ENCODE measurements at regions of chr7 and their contacts with region 1.

Region 1: DNA sequence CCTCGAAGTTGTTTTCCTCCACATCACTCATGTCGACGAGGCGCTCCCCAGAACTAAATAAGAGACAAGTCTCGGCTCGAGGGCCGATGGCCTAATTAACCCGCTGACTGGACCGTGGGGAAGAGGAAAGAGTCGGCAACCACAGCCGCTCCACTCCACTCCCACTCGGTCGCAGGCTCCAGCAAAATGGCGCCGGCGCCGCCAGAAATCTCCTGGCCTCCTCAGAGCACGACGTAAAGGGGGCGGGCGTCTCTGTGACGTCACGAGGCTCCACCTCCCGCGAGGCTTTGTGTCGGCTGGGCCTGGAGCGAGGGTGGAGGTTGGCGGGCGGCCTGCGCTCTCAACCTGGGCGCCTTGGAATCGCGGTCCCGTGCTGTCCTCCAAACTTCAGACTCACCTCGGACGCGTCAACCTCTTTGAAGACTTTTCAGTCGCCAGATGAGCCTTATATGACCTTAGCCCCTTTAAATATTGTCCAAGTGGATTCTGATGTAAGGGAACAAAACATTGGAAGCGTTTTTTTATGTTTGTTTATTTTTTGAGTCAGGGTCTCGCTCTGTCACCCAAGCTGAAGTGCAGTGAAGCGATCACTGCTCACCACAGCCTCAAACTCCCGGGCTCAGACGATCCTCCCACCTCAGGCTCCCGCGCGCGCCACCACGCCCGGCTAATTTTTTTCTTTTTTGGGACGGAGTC is at the start of gene TRA2A:
- DNase-seq: peak; percentile 97
- ATAC-seq: peak; percentile 90
- H3K4me3 ChIP-seq: peak within 1 kb of the TSS; percentile 80 to 100 (median 100)
- H3K4me3 Mint-ChIP-seq: peak within 1 kb of the TSS; percentile 99
- H3K27ac ChIP-seq: peak within 1 kb of the TSS; percentile 97 to 99
- H3K27ac Mint-ChIP-seq: peak within 1 kb of the TSS; percentile 99
- H3K4me1 ChIP-seq: peaks cover 29 to 30% of the 10 kb centered on the region in 2 donors
- H3K4me1 Mint-ChIP-seq: peaks cover 44% of the 10 kb centered on the region
- H3K27me3 ChIP-seq: no peaks in the 10 kb centered on the region
- H3K27me3 Mint-ChIP-seq: no peaks in the 10 kb centered on the region
- CTCF ChIP-seq: no peak
- total RNA-seq, gene TRA2A: 173 and 184 TPM in 2 replicates

Region 2: DNA sequence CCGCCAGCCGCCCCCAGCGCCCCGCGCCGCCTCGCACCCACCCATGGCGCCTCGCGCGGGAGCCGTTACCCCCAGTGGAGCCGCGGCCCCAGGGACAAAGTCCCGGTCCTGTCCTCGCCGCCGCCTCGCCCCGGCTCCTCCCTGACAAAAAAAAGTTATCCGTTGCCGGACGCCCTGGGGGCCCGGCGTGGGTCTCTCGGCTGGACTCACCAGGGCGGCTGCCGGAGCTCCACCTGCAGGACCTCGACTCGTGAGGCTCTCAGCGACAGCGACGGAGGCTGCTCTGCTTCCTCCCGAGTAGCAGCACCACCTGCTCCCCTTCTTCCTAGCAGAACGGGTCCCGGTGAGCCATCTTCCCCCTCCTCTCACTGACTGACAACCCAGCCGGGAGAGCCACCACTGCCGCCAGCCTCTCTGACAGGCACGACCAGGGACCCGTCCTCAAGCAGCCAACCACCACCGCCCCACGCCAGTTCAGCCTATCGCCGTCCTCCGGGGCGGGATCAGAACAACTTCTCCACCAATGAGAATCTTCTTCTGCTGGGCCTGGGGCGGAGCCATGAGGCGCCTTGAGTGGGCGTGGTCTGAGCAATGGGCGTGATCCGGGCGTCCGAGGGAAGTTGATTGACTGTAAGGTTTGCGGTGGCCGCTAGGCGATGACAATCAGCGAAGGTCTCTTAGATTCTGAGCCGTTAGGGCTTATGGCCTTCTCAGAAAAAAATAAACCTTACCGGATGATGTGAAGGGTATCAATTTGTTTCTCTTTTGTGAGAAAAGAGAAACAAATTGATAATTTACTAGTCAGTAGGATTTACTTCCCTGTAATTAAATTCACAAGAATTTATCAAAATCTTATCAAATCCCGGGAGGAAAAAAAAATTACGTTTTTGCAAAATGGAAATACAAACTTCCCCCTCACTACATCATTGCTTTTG is 518.0 kb before region 1 on chr7 and contains the start of gene HYCC1:
- CTCF ChIA-PET with region 1: no interaction called
- POLR2A ChIA-PET with region 1: no interaction called
- intact Hi-C with region 1: loop called (anchors 10 kb)
- DNase-seq: peak; percentile 99
- ATAC-seq: peak; percentile 96
- H3K4me3 ChIP-seq: peak within 1 kb of the TSS; percentile 68 to 85 (median 80)
- H3K4me3 Mint-ChIP-seq: peak within 1 kb of the TSS; percentile 99
- H3K27ac ChIP-seq: peak within 1 kb of the TSS; percentile 63 to 70
- H3K27ac Mint-ChIP-seq: peak within 1 kb of the TSS; percentile 98
- H3K4me1 ChIP-seq: peaks cover 73 to 74% of the 10 kb centered on the region in 2 donors
- H3K4me1 Mint-ChIP-seq: peaks cover 42% of the 10 kb centered on the region
- H3K27me3 ChIP-seq: no peaks in the 10 kb centered on the region
- H3K27me3 Mint-ChIP-seq: no peaks in the 10 kb centered on the region
- CTCF ChIP-seq: peak; percentile 72
- total RNA-seq, gene HYCC1: 39.6 and 40.8 TPM in 2 replicates

Region 3: DNA sequence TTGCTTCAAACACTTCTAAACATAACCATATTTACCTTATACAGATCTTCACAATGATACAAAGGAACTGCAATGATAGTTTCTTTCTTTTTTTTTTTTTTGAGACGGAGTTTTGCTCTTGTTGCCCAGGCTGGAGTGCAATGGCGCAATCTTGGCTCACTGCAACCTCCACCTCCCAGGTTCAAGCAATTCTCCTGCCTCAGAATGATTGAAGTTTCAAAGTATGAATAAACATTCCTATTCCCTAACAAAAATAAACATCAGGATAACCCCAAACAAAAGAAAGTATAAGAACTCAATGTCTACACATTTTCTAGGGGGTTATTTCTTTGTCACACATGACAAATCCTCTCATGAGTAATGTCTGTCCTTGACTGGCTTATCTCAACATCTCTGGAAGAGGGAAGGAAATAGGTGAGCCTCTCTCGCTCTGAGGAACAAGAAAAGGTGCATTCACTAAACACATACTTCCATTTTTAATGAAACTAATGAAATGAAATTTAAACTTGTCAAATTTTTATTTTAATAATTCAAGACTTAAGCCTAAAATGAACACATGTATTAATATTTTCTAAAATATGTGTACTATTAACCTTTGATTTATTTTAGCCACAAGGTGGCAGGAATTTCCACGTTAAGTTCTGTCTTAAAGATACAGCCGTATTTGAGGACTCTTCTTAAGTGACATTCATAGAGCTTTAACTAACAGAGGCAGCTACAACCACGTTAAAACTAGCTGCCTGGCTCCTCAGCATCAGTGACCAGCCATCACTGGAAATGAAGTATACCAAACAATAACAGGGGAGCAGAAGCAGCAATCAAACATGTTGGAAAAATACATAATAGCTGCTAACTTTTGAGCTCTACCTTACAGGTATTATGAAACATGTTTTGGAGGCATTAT is 174.5 kb before region 1 on chr7:
- CTCF ChIA-PET with region 1: interaction called, 5 read pairs
- POLR2A ChIA-PET with region 1: interaction called, 5 read pairs
- intact Hi-C with region 1: loop called (anchors 5 kb)
- DNase-seq: peak; percentile 70
- ATAC-seq: peak; percentile 79
- H3K4me3 ChIP-seq: no peak overlapping the region
- H3K4me3 Mint-ChIP-seq: no peak overlapping the region
- H3K27ac ChIP-seq: no peak overlapping the region
- H3K27ac Mint-ChIP-seq: no peak overlapping the region
- H3K4me1 ChIP-seq: peaks cover 2 to 9% of the 10 kb centered on the region in 2 donors
- H3K4me1 Mint-ChIP-seq: peaks cover 15% of the 10 kb centered on the region
- H3K27me3 ChIP-seq: peaks cover 0 to 3% (median 0%) of the 10 kb centered on the region in 4 experiments
- H3K27me3 Mint-ChIP-seq: no peaks in the 10 kb centered on the region
- CTCF ChIP-seq: peak; percentile 78

Region 4: DNA sequence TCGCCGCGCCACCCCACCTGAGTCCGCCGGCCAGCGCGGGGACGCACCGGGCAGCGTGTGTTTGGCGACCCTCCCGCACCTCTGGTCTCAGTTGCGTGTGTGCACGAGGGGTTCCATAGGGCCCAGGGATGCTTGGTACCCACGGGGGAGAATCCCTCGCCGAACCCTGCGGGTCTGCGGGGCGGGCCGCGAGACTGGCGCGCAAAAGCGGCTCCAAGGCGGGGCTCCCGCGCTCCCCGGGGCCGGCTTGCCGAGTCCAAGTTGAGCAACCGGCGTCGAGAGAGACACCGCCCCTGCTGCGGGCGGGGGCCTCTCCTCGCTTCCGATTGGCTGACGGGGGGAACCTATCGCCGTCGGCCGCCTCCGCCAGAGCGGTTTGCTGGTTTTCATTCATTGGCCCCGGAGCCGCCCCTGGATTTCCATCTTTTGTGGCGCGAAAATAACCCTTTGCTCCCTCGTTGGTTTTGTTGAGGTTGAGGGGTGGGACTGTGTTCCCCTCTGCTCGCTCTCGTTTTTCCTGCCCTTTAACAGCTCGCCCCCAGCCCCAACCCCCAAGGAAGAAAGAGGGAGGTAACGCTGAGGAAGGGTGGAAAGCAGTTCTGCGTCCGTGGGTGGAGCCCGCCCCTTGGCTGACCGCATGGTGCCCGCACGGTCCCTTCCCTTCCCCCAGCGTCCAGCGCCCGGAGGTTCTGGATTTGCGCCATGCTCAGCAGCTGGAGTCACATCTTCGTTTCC is 57.7 kb before region 1 on chr7:
- CTCF ChIA-PET with region 1: no interaction called
- POLR2A ChIA-PET with region 1: interaction called, 3 read pairs
- intact Hi-C with region 1: loop called (anchors 2 kb)
- DNase-seq: peak; percentile 80
- ATAC-seq: peak; percentile 60
- H3K4me3 ChIP-seq: peak overlapping the region; percentile 1 to 81 (median 36)
- H3K4me3 Mint-ChIP-seq: peak overlapping the region; percentile 81
- H3K27ac ChIP-seq: no peak overlapping the region
- H3K27ac Mint-ChIP-seq: peak overlapping the region; percentile 71
- H3K4me1 ChIP-seq: peaks cover 41 to 51% of the 10 kb centered on the region in 2 donors
- H3K4me1 Mint-ChIP-seq: peaks cover 30% of the 10 kb centered on the region
- H3K27me3 ChIP-seq: peaks cover 0 to 83% (median 71%) of the 10 kb centered on the region in 4 experiments
- H3K27me3 Mint-ChIP-seq: peaks cover 61% of the 10 kb centered on the region
- CTCF ChIP-seq: no peak

Region 5: GRCh38 chr7:23597094-23598091 is 65.5 kb after region 1 on chr7 and contains the start of gene CCDC126:
- CTCF ChIA-PET with region 1: interaction called, 3 read pairs
- POLR2A ChIA-PET with region 1: no interaction called
- intact Hi-C with region 1: loop called (anchors 1 kb)
- DNase-seq: peak; percentile 89
- ATAC-seq: peak; percentile 92
- H3K4me3 ChIP-seq: peak within 1 kb of the TSS; percentile 79 to 93 (median 88)
- H3K4me3 Mint-ChIP-seq: peak within 1 kb of the TSS; percentile 91
- H3K27ac ChIP-seq: peak within 1 kb of the TSS; percentile 70 to 80
- H3K27ac Mint-ChIP-seq: peak within 1 kb of the TSS; percentile 80
- H3K4me1 ChIP-seq: peaks cover 15 to 58% of the 10 kb centered on the region in 2 donors
- H3K4me1 Mint-ChIP-seq: peaks cover 41% of the 10 kb centered on the region
- H3K27me3 ChIP-seq: no peaks in the 10 kb centered on the region
- H3K27me3 Mint-ChIP-seq: no peaks in the 10 kb centered on the region
- CTCF ChIP-seq: no peak
- total RNA-seq, gene CCDC126: 15.0 and 18.0 TPM in 2 replicates

Region 6: DNA sequence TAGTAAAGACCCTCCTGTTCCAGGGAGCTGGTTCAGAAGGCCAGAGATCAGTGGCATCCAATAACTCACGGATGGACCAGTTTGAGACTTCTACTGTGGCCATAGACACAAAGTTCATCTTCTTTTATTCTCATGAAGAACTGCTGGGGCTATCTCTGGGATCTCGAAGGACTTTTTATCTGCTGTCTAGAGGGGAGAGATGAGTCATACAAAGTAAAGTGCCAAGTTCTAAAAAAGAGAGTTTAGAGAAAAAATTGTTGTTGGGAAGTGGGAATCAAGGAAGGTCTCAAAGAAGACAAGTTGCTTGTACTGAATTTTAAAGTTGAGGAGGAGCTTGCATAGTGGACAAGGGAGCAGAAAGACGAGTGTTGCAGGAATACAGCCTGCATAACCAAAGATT is 140.1 kb after region 1 on chr7:
- CTCF ChIA-PET with region 1: no interaction called
- POLR2A ChIA-PET with region 1: no interaction called
- intact Hi-C with region 1: no loop called
- DNase-seq: no peak
- ATAC-seq: no peak
- H3K4me3 ChIP-seq: no peak overlapping the region
- H3K4me3 Mint-ChIP-seq: no peak overlapping the region
- H3K27ac ChIP-seq: no peak overlapping the region
- H3K27ac Mint-ChIP-seq: no peak overlapping the region
- H3K4me1 ChIP-seq: no peaks in the 10 kb centered on the region
- H3K4me1 Mint-ChIP-seq: no peaks in the 10 kb centered on the region
- H3K27me3 ChIP-seq: no peaks in the 10 kb centered on the region
- H3K27me3 Mint-ChIP-seq: no peaks in the 10 kb centered on the region
- CTCF ChIP-seq: no peak

Region 7: GRCh38 chr7:24572997-24573625 is 1041.2 kb after region 1 on chr7 and contains the start of gene PALS2:
- CTCF ChIA-PET with region 1: no interaction called
- POLR2A ChIA-PET with region 1: no interaction called
- intact Hi-C with region 1: loop called (anchors 10 kb)
- DNase-seq: peak; percentile 90
- ATAC-seq: peak; percentile 79
- H3K4me3 ChIP-seq: peak within 1 kb of the TSS; percentile 63 to 88 (median 84)
- H3K4me3 Mint-ChIP-seq: peak within 1 kb of the TSS; percentile 91
- H3K27ac ChIP-seq: peak within 1 kb of the TSS; percentile 70 to 73
- H3K27ac Mint-ChIP-seq: peak within 1 kb of the TSS; percentile 89
- H3K4me1 ChIP-seq: peaks cover 24 to 29% of the 10 kb centered on the region in 2 donors
- H3K4me1 Mint-ChIP-seq: peaks cover 37% of the 10 kb centered on the region
- H3K27me3 ChIP-seq: peaks cover 0 to 3% (median 0%) of the 10 kb centered on the region in 4 experiments
- H3K27me3 Mint-ChIP-seq: peaks cover 5% of the 10 kb centered on the region
- CTCF ChIP-seq: no peak
- total RNA-seq, gene PALS2: 47.8 and 54.2 TPM in 2 replicates

Measured in B cell (primary cell).